B cell (primary cell): ENCODE measurements at regions of chr5 and their contacts with region 1.

Region 1: DNA sequence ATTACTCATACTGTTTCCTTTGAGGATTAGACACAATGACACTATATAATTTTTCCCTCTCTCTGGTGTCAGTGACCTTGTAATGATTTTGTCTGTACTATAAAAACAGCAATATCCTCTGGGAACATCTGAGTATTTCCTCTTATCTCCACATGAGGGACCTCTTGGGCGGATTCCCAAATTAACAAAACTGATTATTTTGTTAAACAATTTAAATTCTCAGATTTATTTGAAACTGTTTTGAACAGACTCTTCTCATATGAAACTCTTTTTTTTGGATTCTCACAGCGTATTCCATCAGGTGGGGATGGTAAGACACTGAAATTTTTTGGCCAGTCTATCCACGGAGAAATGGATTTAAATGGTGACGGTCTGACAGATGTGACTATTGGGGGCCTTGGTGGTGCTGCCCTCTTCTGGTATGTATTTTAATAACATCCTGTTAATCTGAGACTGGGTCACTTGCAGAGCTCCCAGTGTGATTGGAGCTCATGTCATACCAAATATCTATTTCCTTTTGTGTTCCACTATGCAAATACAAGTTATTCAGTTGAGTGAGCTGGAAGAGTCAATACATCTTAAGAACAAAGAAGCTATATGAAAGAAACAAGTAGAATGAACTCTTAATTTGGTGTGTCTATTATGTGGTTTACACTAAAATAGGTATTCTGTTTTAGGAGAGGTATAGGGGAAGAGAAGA is 73.8 kb upstream of the ITGA2 start:
- DNase-seq: peak; percentile 66
- ATAC-seq: peak; percentile 84
- H3K4me3 ChIP-seq: no peak overlapping the region
- H3K4me3 Mint-ChIP-seq: peak overlapping the region; percentile 42
- H3K27ac ChIP-seq: no peak overlapping the region
- H3K27ac Mint-ChIP-seq: no peak overlapping the region
- H3K4me1 ChIP-seq: no peaks in the 10 kb centered on the region
- H3K4me1 Mint-ChIP-seq: peaks cover 4% of the 10 kb centered on the region
- H3K27me3 ChIP-seq: no peaks in the 10 kb centered on the region
- H3K27me3 Mint-ChIP-seq: peaks cover 3% of the 10 kb centered on the region
- CTCF ChIP-seq: peak; percentile 93

Region 2: GRCh38 chr5:50962934-50963872 is 1952.1 kb before region 1 on chr5:
- CTCF ChIA-PET with region 1: no interaction called
- POLR2A ChIA-PET with region 1: no interaction called
- intact Hi-C with region 1: loop called (anchors 10 kb)
- DNase-seq: peak; percentile 68
- ATAC-seq: peak; percentile 75
- H3K4me3 ChIP-seq: peak overlapping the region; percentile 31 to 68 (median 47)
- H3K4me3 Mint-ChIP-seq: peak overlapping the region; percentile 86
- H3K27ac ChIP-seq: no peak overlapping the region
- H3K27ac Mint-ChIP-seq: no peak overlapping the region
- H3K4me1 ChIP-seq: peaks cover 42 to 43% of the 10 kb centered on the region in 2 donors
- H3K4me1 Mint-ChIP-seq: peaks cover 41% of the 10 kb centered on the region
- H3K27me3 ChIP-seq: peaks cover 1 to 62% (median 43%) of the 10 kb centered on the region in 4 experiments
- H3K27me3 Mint-ChIP-seq: peaks cover 60% of the 10 kb centered on the region
- CTCF ChIP-seq: peak; percentile 87

Region 3: GRCh38 chr5:52693280-52693679 is 222.0 kb before region 1 on chr5:
- CTCF ChIA-PET with region 1: interaction called, 9 read pairs
- POLR2A ChIA-PET with region 1: no interaction called
- intact Hi-C with region 1: loop called (anchors 10 kb)
- DNase-seq: no peak
- ATAC-seq: no peak
- H3K4me3 ChIP-seq: no peak overlapping the region
- H3K4me3 Mint-ChIP-seq: no peak overlapping the region
- H3K27ac ChIP-seq: no peak overlapping the region
- H3K27ac Mint-ChIP-seq: no peak overlapping the region
- H3K4me1 ChIP-seq: no peaks in the 10 kb centered on the region
- H3K4me1 Mint-ChIP-seq: no peaks in the 10 kb centered on the region
- H3K27me3 ChIP-seq: no peaks in the 10 kb centered on the region
- H3K27me3 Mint-ChIP-seq: no peaks in the 10 kb centered on the region
- CTCF ChIP-seq: no peak

Region 4: GRCh38 chr5:52787600-52788504 is 127.5 kb before region 1 on chr5 and contains the starts of genes ITGA1 and PELO:
- CTCF ChIA-PET with region 1: interaction called, 6 read pairs
- POLR2A ChIA-PET with region 1: no interaction called
- intact Hi-C with region 1: loop called (anchors 1 kb)
- DNase-seq: peak; percentile 54
- ATAC-seq: peak; percentile 76
- H3K4me3 ChIP-seq: peak within 1 kb of the TSS; percentile 41 to 79 (median 64)
- H3K4me3 Mint-ChIP-seq: peak within 1 kb of the TSS; percentile 87
- H3K27ac ChIP-seq: no peak within 1 kb of the TSS
- H3K27ac Mint-ChIP-seq: no peak within 1 kb of the TSS
- H3K4me1 ChIP-seq: peaks cover 13 to 17% of the 10 kb centered on the region in 2 donors
- H3K4me1 Mint-ChIP-seq: peaks cover 19% of the 10 kb centered on the region
- H3K27me3 ChIP-seq: peaks cover 0 to 45% (median 32%) of the 10 kb centered on the region in 4 experiments
- H3K27me3 Mint-ChIP-seq: peaks cover 46% of the 10 kb centered on the region
- CTCF ChIP-seq: peak; percentile 7
- total RNA-seq, gene ITGA1: 0.05 and 0.74 TPM in 2 replicates
- total RNA-seq, gene PELO: 5.8 and 6.4 TPM in 2 replicates

Region 5: GRCh38 chr5:52987711-52988331 is 72.5 kb after region 1 on chr5:
- CTCF ChIA-PET with region 1: no interaction called
- POLR2A ChIA-PET with region 1: no interaction called
- intact Hi-C with region 1: no loop called
- DNase-seq: no peak
- ATAC-seq: no peak
- H3K4me3 ChIP-seq: no peak overlapping the region
- H3K4me3 Mint-ChIP-seq: peak overlapping the region; percentile 78
- H3K27ac ChIP-seq: no peak overlapping the region
- H3K27ac Mint-ChIP-seq: no peak overlapping the region
- H3K4me1 ChIP-seq: peaks cover 13 to 17% of the 10 kb centered on the region in 2 donors
- H3K4me1 Mint-ChIP-seq: peaks cover 12% of the 10 kb centered on the region
- H3K27me3 ChIP-seq: peaks cover 0 to 28% (median 19%) of the 10 kb centered on the region in 4 experiments
- H3K27me3 Mint-ChIP-seq: peaks cover 54% of the 10 kb centered on the region
- CTCF ChIP-seq: no peak